GM12878 (cell line): ENCODE measurements at regions of chr22 and their contacts with region 1.

Region 1: DNA sequence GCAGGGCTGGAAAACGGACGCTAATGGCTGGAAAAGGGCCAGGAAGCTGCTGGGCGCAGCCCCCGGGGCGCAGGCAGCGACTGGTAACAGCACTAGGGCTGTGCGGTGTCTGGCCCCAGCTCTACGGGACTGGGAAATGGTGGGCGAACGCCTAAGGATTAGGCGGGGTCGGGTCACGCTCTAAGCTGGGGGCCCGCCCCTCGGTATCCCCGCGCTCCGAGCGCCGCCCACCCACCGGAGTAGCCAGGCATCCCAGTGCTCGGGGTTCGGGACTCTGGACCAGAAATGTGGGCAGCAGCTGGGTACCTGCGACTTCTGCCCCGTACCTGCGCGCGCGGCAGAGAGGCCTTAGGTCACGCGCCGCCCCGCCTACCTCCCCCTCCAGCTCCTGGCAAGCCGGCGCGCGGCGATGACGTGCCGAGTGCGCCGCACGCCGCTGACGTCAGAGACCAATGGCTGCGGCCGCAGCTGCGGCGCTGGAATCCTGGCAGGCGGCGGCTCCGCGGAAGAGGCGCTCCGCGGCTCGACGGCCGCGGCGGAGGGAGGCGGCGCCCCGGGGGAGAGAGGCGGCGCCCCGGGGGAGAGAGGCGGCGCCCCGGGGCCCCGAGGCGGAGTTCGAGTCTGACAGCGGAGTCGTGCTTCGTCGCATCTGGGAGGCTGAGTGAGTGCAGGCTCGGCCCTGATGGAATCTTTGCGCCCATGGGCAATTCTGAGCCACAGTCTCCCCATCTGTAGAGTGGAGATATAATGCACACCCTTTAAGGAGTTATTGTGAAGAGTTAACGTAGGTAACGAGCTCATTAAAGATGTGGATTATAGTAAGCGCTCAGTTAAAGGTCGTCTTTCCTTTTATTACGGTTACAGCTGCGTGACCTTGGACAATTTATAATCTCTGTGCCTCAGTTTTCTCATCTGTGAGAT is at the starts of genes HPS4 and SRRD:
- DNase-seq: peak; percentile 56
- ATAC-seq: peak; percentile 79
- H3K4me3 ChIP-seq: peak within 1 kb of the TSS; percentile 97
- H3K27ac ChIP-seq: peak within 1 kb of the TSS; percentile 88
- H3K4me1 ChIP-seq: peaks cover 23% of the 10 kb centered on the region
- H3K27me3 ChIP-seq: no peaks in the 10 kb centered on the region
- CTCF ChIP-seq: no peak
- EP300 ChIP-seq: peak; percentile 12 to 19; a peak in 1 of 4 replicates
- POLR2A ChIP-seq: peak; percentile 95
- RAD21 ChIP-seq: no peak
- polyA plus RNA-seq, gene HPS4: 11.7 to 12.3 TPM
- polyA plus RNA-seq, gene SRRD: 4.1 to 15.4 TPM

Region 2: DNA sequence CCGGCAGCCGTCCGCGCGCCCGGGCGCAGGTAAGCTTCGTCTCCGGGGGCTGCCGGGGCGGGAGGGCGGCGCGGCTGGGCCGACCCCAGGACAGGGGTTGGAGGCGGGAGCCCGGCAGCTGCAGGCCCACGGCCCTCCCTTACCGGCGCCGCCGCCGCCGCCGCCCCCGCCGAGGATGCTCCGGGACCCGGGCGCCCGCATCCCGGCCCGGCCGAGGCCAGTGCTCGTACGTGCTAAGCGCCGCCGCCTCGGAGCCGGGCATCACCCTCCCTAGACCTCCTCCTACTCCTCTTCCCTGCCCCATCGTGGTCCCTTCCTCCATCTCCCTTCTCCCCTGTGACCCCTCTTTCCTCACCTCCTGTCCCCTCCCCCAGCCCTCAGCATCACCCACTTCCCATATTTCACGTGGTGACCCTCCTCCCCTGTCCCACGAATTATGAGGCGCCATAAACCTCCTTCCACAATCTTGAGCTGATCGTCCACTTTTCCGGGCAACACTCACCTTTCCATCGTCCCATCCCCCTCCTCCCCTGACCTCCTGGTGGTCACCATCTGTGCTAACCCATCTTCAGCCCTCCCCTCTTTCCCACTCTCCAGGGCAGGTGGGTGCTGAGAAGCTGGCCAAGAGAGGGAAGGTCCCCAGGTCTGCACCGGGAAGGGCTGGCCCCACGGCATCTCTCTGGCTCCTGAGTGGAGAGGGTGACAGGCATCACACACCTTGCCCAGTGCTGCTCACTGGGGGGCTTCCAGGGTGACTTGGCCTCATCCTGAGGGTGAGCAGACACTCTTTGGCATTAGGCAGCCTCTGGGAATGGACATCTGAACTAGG is 54.0 kb before region 1 on chr22:
- CTCF ChIA-PET with region 1: interaction called, 14 read pairs
- POLR2A ChIA-PET with region 1: interaction called, 18 read pairs
- RAD21 ChIA-PET with region 1: interaction called, 10 read pairs
- SMC1A ChIA-PET with region 1: interaction called, 9 read pairs
- in situ Hi-C with region 1: no loop called
- intact Hi-C with region 1: loop called (anchors 5 kb)
- DNase-seq: no peak
- ATAC-seq: no peak
- H3K4me3 ChIP-seq: peak overlapping the region; percentile 92
- H3K27ac ChIP-seq: peak overlapping the region; percentile 41
- H3K4me1 ChIP-seq: peaks cover 36% of the 10 kb centered on the region
- H3K27me3 ChIP-seq: no peaks in the 10 kb centered on the region
- CTCF ChIP-seq: no peak
- EP300 ChIP-seq: no peak
- POLR2A ChIP-seq: no peak
- RAD21 ChIP-seq: no peak

Region 3: DNA sequence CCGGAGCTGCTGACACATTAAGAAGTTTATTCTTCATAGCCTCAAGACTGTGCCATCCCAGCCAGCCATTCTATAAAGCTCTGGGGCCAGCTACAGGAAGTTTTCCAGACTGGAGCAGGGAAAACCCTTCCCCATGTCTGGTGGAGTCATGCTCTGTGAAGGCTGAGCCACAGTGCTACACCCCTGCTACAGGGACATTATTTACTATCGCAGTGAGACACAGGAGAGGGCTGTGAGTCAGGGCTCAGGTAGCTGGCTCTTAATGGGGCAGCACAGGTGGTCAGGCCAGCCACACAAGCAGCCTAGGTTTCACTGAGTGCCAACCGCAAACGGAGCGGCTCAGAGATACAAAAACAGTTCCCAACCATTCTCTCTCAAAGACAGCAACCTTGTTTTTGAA is 12.2 kb before region 1 on chr22:
- CTCF ChIA-PET with region 1: interaction called, 11 read pairs
- POLR2A ChIA-PET with region 1: interaction called, 4 read pairs
- RAD21 ChIA-PET with region 1: no interaction called
- SMC1A ChIA-PET with region 1: interaction called, 17 read pairs
- in situ Hi-C with region 1: no loop called
- intact Hi-C with region 1: no loop called
- DNase-seq: no peak
- ATAC-seq: no peak
- H3K4me3 ChIP-seq: no peak overlapping the region
- H3K27ac ChIP-seq: no peak overlapping the region
- H3K4me1 ChIP-seq: peaks cover 5% of the 10 kb centered on the region
- H3K27me3 ChIP-seq: no peaks in the 10 kb centered on the region
- CTCF ChIP-seq: no peak
- EP300 ChIP-seq: no peak
- POLR2A ChIP-seq: no peak
- RAD21 ChIP-seq: no peak

Region 4: DNA sequence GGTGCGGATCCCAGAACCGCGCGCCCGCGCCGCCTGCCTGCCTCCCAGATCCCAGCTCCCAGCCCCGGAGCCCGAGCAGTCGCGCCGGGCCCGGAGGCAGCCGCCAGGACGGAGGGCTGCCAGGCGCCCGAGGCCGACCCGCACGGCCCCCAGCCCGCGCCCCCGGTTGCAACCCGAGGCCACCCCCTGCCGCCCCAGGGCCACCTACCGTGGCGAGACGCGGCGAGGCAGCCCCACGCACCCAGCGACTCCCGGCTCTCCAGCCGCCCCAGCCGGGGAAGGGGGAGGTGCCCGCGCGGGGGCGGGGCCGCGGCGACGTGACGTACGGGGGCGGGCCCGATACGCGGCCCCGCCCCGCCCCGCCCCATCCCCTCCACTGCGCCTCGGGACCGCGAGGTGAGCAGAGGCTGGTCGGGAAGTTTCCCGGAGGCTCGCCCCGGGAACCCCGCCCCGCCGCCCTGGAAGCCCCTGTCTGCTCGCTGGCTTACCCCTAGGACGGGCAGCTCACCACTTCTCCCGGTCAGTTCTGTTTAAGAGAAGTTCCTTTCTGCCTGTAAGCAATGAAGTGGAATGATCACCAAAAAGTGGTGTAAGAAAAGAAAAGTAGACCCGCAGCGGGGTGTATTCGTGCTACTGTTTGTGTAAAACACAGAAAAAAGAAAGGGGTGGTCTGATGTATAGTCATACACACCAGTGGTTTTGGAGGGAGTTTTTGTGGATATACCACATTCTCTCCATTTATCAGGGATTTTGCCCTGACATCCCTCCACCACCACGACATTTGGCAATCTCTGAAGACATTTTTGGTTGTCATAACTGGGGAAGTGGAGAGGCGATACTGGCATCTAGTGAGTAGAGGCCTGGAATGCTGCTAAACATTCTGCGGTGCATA is 106.4 kb after region 1 on chr22 and contains the start of gene TPST2:
- CTCF ChIA-PET with region 1: no interaction called
- POLR2A ChIA-PET with region 1: interaction called, 10 read pairs
- RAD21 ChIA-PET with region 1: no interaction called
- SMC1A ChIA-PET with region 1: interaction called, 3 read pairs
- in situ Hi-C with region 1: no loop called
- intact Hi-C with region 1: no loop called
- DNase-seq: no peak
- ATAC-seq: peak; percentile 81
- H3K4me3 ChIP-seq: peak within 1 kb of the TSS; percentile 89
- H3K27ac ChIP-seq: peak within 1 kb of the TSS; percentile 82
- H3K4me1 ChIP-seq: peaks cover 41% of the 10 kb centered on the region
- H3K27me3 ChIP-seq: no peaks in the 10 kb centered on the region
- CTCF ChIP-seq: no peak
- EP300 ChIP-seq: no peak
- POLR2A ChIP-seq: peak; percentile 85
- RAD21 ChIP-seq: 0 out of 2 replicates have a peak, but pooled peaks have one; percentile 2
- polyA plus RNA-seq, gene TPST2: 6.3 to 10.7 TPM